CD4-positive, alpha-beta memory T cell (primary cell): ENCODE measurements at regions of chr17 and their contacts with region 1.

Region 1: GRCh38 chr17:75325827-75326225 is 36.6 kb upstream of the SLC25A19 start:
- DNase-seq: no peak
- H3K4me3 ChIP-seq: no peak overlapping the region
- H3K4me3 Mint-ChIP-seq: no peak overlapping the region
- H3K27ac ChIP-seq: no peak overlapping the region
- H3K27ac Mint-ChIP-seq: peak overlapping the region; percentile 52 to 84 (median 66)
- H3K4me1 ChIP-seq: peaks cover 31% of the 10 kb centered on the region
- H3K4me1 Mint-ChIP-seq: peaks cover 11 to 18% (median 14%) of the 10 kb centered on the region in 4 donors
- H3K27me3 ChIP-seq: no peaks in the 10 kb centered on the region
- H3K27me3 Mint-ChIP-seq: no peaks in the 10 kb centered on the region

Region 2: GRCh38 chr17:75012346-75013091 is 313.3 kb before region 1 on chr17 and contains the start of gene MRPL58:
- CTCF ChIA-PET with region 1: no interaction called
- POLR2A ChIA-PET with region 1: no interaction called
- intact Hi-C with region 1: no loop called
- DNase-seq: peak; percentile 75 to 79 (median 76)
- H3K4me3 ChIP-seq: peak within 1 kb of the TSS; percentile 85 to 90
- H3K4me3 Mint-ChIP-seq: peak within 1 kb of the TSS; percentile 93 to 98 (median 96)
- H3K27ac ChIP-seq: peak within 1 kb of the TSS; percentile 71
- H3K27ac Mint-ChIP-seq: peak within 1 kb of the TSS; percentile 80 to 94 (median 92)
- H3K4me1 ChIP-seq: peaks cover 19% of the 10 kb centered on the region
- H3K4me1 Mint-ChIP-seq: peaks cover 20 to 44% (median 32%) of the 10 kb centered on the region in 4 donors
- H3K27me3 ChIP-seq: no peaks in the 10 kb centered on the region
- H3K27me3 Mint-ChIP-seq: no peaks in the 10 kb centered on the region
- total RNA-seq, gene MRPL58: 22.6 to 26.7 TPM

Region 3: GRCh38 chr17:75338335-75338734 is 12.5 kb after region 1 on chr17:
- CTCF ChIA-PET with region 1: interaction called, 38 read pairs
- POLR2A ChIA-PET with region 1: interaction called, 9 read pairs
- intact Hi-C with region 1: no loop called
- DNase-seq: peak in 4 of 5 donors; percentile 27 to 38 (median 30)
- H3K4me3 ChIP-seq: no peak overlapping the region
- H3K4me3 Mint-ChIP-seq: peak overlapping the region; percentile 49 to 86 (median 74)
- H3K27ac ChIP-seq: peak overlapping the region; percentile 22
- H3K27ac Mint-ChIP-seq: peak overlapping the region; percentile 21 to 91 (median 76)
- H3K4me1 ChIP-seq: peaks cover 86% of the 10 kb centered on the region
- H3K4me1 Mint-ChIP-seq: peaks cover 54 to 84% (median 68%) of the 10 kb centered on the region in 4 donors
- H3K27me3 ChIP-seq: no peaks in the 10 kb centered on the region
- H3K27me3 Mint-ChIP-seq: no peaks in the 10 kb centered on the region

Region 4: DNA sequence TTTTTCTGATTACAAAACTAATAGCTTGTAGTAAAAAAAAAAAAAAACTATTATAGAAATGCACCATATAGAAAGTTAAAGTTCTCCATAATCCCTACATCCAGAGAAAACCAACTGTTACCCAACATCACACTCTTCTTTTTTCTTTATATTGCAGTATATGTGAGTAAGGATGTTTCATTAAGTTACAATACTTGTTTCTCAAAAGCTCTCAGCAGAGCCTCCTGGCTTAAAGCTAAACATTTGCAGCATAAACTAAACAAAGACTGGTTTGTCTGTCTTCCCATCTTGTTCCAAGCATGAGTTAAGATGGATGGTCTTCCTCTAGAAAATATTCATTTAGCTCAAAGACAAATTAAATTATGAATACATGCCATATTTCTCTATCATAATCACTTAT is 54.5 kb after region 1 on chr17:
- CTCF ChIA-PET with region 1: interaction called, 22 read pairs
- POLR2A ChIA-PET with region 1: no interaction called
- intact Hi-C with region 1: no loop called
- DNase-seq: no peak
- H3K4me3 ChIP-seq: no peak overlapping the region
- H3K4me3 Mint-ChIP-seq: peak overlapping the region in 2 of 8 donors; percentile 14 to 25
- H3K27ac ChIP-seq: no peak overlapping the region
- H3K27ac Mint-ChIP-seq: peak overlapping the region in 3 of 7 donors; percentile 32 to 75 (median 44)
- H3K4me1 ChIP-seq: peaks cover 60% of the 10 kb centered on the region
- H3K4me1 Mint-ChIP-seq: peaks cover 33 to 60% (median 48%) of the 10 kb centered on the region in 4 donors
- H3K27me3 ChIP-seq: no peaks in the 10 kb centered on the region
- H3K27me3 Mint-ChIP-seq: no peaks in the 10 kb centered on the region

Region 5: GRCh38 chr17:75393523-75394331 is 67.9 kb after region 1 on chr17:
- CTCF ChIA-PET with region 1: interaction called, 61 read pairs
- POLR2A ChIA-PET with region 1: interaction called, 25 read pairs
- intact Hi-C with region 1: no loop called
- DNase-seq: peak; percentile 66 to 86 (median 75)
- H3K4me3 ChIP-seq: peak overlapping the region; percentile 30 to 60
- H3K4me3 Mint-ChIP-seq: peak overlapping the region; percentile 90 to 97 (median 95)
- H3K27ac ChIP-seq: peak overlapping the region; percentile 66
- H3K27ac Mint-ChIP-seq: peak overlapping the region; percentile 71 to 96 (median 89)
- H3K4me1 ChIP-seq: peaks cover 78% of the 10 kb centered on the region
- H3K4me1 Mint-ChIP-seq: peaks cover 63 to 88% (median 72%) of the 10 kb centered on the region in 4 donors
- H3K27me3 ChIP-seq: no peaks in the 10 kb centered on the region
- H3K27me3 Mint-ChIP-seq: no peaks in the 10 kb centered on the region